B cell (primary cell): ENCODE measurements at regions of chr19 and their contacts with region 1.

Region 1: DNA sequence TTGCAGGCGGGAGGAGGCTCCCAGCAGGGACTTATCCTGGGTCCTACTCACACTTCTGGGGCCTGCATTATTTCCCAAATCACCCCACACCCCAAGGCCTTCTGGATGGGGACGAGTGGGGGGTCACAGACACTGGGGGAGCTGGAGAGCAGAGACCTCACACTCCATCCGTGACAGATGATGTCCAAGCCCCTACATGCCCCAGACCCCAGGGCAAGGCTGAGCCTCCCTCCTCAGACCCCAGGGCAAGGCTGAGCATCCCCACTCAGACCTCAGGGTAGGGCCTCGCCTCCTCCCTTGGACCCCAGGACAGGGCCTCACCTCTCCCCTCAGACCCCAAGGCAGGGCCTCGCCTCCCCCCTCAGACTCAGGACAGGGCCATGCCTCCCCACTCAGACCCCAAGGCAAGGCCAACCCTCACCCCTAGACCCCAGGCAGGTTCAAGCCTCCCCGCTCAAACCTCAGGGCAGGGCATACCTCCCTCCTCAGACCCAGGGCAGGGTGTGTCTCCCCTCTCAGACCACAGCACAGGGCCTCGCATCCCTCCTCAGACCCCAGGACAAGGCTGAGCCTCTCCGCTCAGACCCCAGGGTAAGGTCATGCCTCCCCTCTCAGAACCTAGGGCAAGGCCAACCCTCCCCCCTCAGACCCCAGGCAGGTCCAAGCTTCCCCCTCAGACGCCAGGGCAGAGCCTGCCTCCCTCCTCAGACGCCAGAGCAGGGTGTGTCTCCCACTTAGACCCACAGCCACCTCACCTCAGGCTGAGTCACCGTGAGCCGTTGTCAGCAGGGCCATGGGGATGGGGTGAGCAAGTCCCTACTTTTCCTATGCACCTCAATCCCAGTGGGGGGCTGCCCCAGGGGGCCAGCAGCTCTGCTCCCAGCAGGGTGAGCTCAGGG is 1.7 kb upstream of the S1PR4 start:
- DNase-seq: peak; percentile 60
- ATAC-seq: no peak
- H3K4me3 ChIP-seq: no peak overlapping the region
- H3K4me3 Mint-ChIP-seq: peak overlapping the region; percentile 67
- H3K27ac ChIP-seq: peak overlapping the region; percentile 91
- H3K27ac Mint-ChIP-seq: peak overlapping the region; percentile 92
- H3K4me1 ChIP-seq: peaks cover 34 to 50% of the 10 kb centered on the region in 2 donors
- H3K4me1 Mint-ChIP-seq: peaks cover 38% of the 10 kb centered on the region
- H3K27me3 ChIP-seq: no peaks in the 10 kb centered on the region
- H3K27me3 Mint-ChIP-seq: no peaks in the 10 kb centered on the region
- CTCF ChIP-seq: no peak

Region 2: GRCh38 chr19:1408300-1409203 is 1768.3 kb before region 1 on chr19:
- CTCF ChIA-PET with region 1: no interaction called
- POLR2A ChIA-PET with region 1: no interaction called
- intact Hi-C with region 1: no loop called
- DNase-seq: peak; percentile 68
- ATAC-seq: no peak
- H3K4me3 ChIP-seq: peak overlapping the region; percentile 48 to 99 (median 92)
- H3K4me3 Mint-ChIP-seq: peak overlapping the region; percentile 92
- H3K27ac ChIP-seq: peak overlapping the region; percentile 78 to 95
- H3K27ac Mint-ChIP-seq: peak overlapping the region; percentile 92
- H3K4me1 ChIP-seq: peaks cover 25 to 47% of the 10 kb centered on the region in 2 donors
- H3K4me1 Mint-ChIP-seq: peaks cover 44% of the 10 kb centered on the region
- H3K27me3 ChIP-seq: peaks cover 0 to 6% (median 0%) of the 10 kb centered on the region in 4 experiments
- H3K27me3 Mint-ChIP-seq: no peaks in the 10 kb centered on the region
- CTCF ChIP-seq: no peak

Region 3: GRCh38 chr19:3154957-3155736 is 21.7 kb before region 1 on chr19:
- CTCF ChIA-PET with region 1: no interaction called
- POLR2A ChIA-PET with region 1: no interaction called
- intact Hi-C with region 1: loop called (anchors 2 kb)
- DNase-seq: peak; percentile 85
- ATAC-seq: peak; percentile 95
- H3K4me3 ChIP-seq: peak overlapping the region in 1 of 5 experiments; percentile 4
- H3K4me3 Mint-ChIP-seq: peak overlapping the region; percentile 76
- H3K27ac ChIP-seq: no peak overlapping the region
- H3K27ac Mint-ChIP-seq: peak overlapping the region; percentile 68
- H3K4me1 ChIP-seq: peaks cover 15% of the 10 kb centered on the region in 2 donors
- H3K4me1 Mint-ChIP-seq: peaks cover 3% of the 10 kb centered on the region
- H3K27me3 ChIP-seq: no peaks in the 10 kb centered on the region
- H3K27me3 Mint-ChIP-seq: no peaks in the 10 kb centered on the region
- CTCF ChIP-seq: no peak

Region 4: DNA sequence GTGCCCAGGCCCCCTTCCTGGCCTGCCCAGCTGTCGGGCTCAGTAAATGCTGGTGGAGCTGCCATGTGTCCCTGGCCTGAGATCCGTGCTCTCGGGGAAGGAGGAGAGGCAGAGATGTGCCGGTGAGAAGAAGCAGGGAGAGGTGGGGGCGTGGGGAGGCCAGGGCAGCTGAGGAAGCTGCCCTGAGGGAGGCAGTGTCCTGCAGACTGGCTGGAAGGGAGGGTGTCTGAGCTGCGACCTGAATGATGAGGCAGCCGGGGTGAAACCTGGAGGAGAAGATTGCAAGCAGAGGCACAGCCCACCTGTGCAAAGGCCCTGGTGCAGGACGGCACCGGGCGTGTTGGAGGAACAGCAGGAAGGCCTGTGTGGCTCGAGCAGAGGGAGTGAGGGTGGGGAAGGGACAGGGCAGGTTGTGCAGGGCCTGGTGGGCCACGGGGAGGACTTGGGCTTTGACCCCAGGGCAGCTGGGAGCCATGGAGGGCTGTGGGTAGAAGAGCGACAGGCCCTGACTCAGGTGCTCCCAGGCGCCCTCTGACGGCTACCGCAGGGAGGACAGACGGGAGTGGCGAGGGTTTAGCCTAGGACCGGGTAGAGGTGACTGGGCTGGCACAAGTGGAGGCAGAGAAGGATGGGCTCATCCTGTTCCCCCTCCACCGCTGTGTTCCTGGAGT is 33.6 kb after region 1 on chr19:
- CTCF ChIA-PET with region 1: interaction called, 3 read pairs
- POLR2A ChIA-PET with region 1: no interaction called
- intact Hi-C with region 1: loop called (anchors 1 kb)
- DNase-seq: peak; percentile 72
- ATAC-seq: peak; percentile 91
- H3K4me3 ChIP-seq: no peak overlapping the region
- H3K4me3 Mint-ChIP-seq: no peak overlapping the region
- H3K27ac ChIP-seq: no peak overlapping the region
- H3K27ac Mint-ChIP-seq: peak overlapping the region; percentile 59
- H3K4me1 ChIP-seq: no peaks in the 10 kb centered on the region
- H3K4me1 Mint-ChIP-seq: peaks cover 4% of the 10 kb centered on the region
- H3K27me3 ChIP-seq: no peaks in the 10 kb centered on the region
- H3K27me3 Mint-ChIP-seq: no peaks in the 10 kb centered on the region
- CTCF ChIP-seq: peak; percentile 75

Region 5: GRCh38 chr19:3243819-3244700 is 67.2 kb after region 1 on chr19:
- CTCF ChIA-PET with region 1: no interaction called
- POLR2A ChIA-PET with region 1: no interaction called
- intact Hi-C with region 1: no loop called
- DNase-seq: peak; percentile 46
- ATAC-seq: no peak
- H3K4me3 ChIP-seq: no peak overlapping the region
- H3K4me3 Mint-ChIP-seq: no peak overlapping the region
- H3K27ac ChIP-seq: no peak overlapping the region
- H3K27ac Mint-ChIP-seq: no peak overlapping the region
- H3K4me1 ChIP-seq: no peaks in the 10 kb centered on the region
- H3K4me1 Mint-ChIP-seq: no peaks in the 10 kb centered on the region
- H3K27me3 ChIP-seq: peaks cover 0 to 7% (median 0%) of the 10 kb centered on the region in 4 experiments
- H3K27me3 Mint-ChIP-seq: peaks cover 4% of the 10 kb centered on the region
- CTCF ChIP-seq: no peak

Region 6: DNA sequence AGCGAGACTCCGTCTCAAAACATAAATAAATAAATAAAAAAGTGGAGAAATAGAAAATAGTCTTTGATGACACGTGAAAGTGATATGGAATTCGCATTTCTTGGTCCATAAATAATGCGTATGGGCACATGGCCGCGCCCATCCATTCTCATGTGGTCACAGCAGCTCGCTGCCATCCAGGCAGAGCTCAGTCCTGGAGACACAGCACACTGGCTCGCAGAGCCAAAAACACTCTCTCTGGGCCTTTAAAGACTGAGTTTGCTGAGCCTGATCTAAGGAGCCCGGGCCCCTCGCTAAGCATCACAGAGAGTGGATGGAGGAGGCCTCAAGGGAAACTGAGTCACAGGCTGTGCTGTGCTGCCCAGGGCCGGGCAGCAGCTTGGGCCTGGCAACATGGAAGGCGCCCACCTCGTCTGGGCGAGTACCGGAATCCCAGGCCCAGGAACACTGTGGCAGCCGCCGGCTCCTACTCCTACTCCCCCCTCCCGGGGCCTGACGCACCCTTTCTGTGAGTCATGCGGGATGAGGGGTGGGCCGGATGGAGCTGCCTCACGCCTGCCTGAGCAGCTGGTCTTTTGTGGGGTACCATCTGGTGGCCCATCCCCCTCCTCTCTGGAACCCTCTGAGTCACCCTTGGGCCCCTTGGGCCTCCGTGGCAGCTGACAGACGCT is 478.7 kb after region 1 on chr19:
- CTCF ChIA-PET with region 1: no interaction called
- POLR2A ChIA-PET with region 1: no interaction called
- intact Hi-C with region 1: no loop called
- DNase-seq: peak; percentile 41
- ATAC-seq: peak; percentile 81
- H3K4me3 ChIP-seq: no peak overlapping the region
- H3K4me3 Mint-ChIP-seq: no peak overlapping the region
- H3K27ac ChIP-seq: no peak overlapping the region
- H3K27ac Mint-ChIP-seq: no peak overlapping the region
- H3K4me1 ChIP-seq: peaks cover 0 to 12% of the 10 kb centered on the region in 2 donors
- H3K4me1 Mint-ChIP-seq: peaks cover 2% of the 10 kb centered on the region
- H3K27me3 ChIP-seq: no peaks in the 10 kb centered on the region
- H3K27me3 Mint-ChIP-seq: no peaks in the 10 kb centered on the region
- CTCF ChIP-seq: no peak